ENCODE measurements at regions of chr16 and their contacts with region 1.

Region 1: GRCh38 chr16:85610508-85611332 is 2.4 kb upstream of the GSE1 start:
- DNase-seq: peak; percentile 88
- ATAC-seq: peak; percentile 49

Region 2: GRCh38 chr16:85420501-85421337 is 190.0 kb before region 1 on chr16:
- intact Hi-C with region 1: loop called (anchors 5 kb)
- DNase-seq: peak; percentile 76
- ATAC-seq: peak; percentile 67

Region 3: GRCh38 chr16:85564277-85565051 is 46.3 kb before region 1 on chr16:
- intact Hi-C with region 1: loop called (anchors 5 kb)
- DNase-seq: no peak
- ATAC-seq: no peak